ENCODE measurements at regions of chr3 and their contacts with region 1.

Region 1: DNA sequence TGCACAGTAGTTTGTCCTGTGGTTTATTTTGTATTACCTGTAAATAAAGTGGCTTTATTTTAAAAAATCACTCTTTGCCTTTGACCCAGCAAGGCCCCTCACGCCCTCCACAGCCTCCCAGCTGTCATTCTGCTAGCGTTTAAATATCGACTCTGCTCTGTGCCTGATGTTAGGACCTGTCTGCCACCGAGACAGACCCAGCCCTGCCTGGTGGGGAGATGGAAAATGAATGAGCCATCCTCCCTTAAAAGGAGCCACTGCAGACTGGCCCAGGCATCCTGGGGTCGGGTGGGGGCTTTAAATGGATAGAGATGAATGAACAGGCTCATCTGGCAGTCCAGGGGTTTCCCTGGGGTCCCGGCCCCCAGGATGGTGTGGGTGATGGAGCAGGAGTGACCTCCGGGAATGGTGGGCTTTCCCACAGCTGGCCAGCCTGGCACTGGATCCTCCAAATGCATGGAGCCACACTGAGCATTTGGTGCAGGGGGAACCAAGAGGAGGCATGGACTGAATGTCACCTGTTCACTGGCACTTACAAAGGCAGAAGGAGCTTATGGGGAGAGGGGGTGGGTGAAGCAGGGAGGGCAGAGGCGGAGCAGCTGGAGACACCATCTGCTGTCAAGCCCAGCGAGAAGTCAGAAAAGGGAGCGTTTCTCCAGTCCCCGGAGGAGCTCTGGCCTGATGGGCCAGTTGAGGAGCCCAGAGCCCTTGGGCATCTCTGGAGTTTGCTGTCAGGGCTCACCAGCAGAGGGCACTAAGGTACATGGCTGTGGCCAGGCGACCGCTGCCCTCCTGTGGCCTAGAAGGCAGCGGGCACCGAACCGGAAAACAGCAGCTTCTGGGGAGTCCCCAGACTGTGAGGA is 11.9 kb downstream of the GRM2 start:
- DNase-seq: peak; percentile 89
- H3K4me3 ChIP-seq: peak overlapping the region in 1 of 2 experiments; percentile 26; a peak in 1 of 4 replicates
- H3K27ac ChIP-seq: no peak overlapping the region
- H3K4me1 ChIP-seq: peaks cover 0 to 2% of the 10 kb centered on the region in 2 experiments; a peak in 1 of 4 replicates
- H3K27me3 ChIP-seq: no peaks in the 10 kb centered on the region
- CTCF ChIP-seq: peak; percentile 71
- EP300 ChIP-seq: no peak
- RAD21 ChIP-seq: peak; percentile 78

Region 2: DNA sequence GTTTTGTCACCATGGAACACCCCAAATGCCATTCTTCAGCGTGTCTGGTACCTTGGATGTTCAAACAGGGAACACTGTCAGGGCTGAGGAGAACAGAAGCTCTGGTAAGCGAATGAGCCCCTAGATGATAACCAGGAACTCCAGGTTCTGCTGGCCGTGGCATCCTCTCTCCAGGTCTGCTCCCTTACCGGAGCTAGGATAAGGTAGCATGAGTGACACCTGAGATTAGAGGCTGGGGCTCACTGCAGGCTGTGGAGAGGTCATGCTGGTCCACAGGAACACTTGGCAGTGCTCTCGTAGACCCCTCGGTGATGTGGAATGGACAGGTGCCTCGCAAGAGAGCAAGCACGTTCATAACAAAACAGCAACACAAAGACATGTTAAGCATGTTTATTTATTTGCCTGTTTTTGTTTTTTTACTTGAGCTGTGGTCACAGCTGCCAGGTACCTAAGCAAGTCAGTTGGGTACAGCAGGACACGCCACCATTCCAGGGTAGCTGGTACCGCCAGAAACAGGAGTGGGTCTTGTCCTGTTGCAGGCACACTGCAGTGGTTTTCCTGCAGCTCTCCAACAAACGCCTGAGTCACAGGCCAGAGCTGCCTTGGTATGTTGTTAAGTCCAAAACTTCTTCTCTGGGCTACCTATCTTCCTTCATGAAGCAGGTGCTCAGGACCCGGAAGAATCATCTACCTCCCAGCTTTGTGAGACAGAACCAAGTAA is 323.1 kb before region 1 on chr3:
- CTCF ChIA-PET with region 1: no interaction called
- POLR2A ChIA-PET with region 1: no interaction called
- DNase-seq: no peak
- H3K4me3 ChIP-seq: no peak overlapping the region
- H3K27ac ChIP-seq: no peak overlapping the region
- H3K4me1 ChIP-seq: peaks cover 11 to 40% of the 10 kb centered on the region in 2 experiments
- H3K27me3 ChIP-seq: no peaks in the 10 kb centered on the region
- CTCF ChIP-seq: no peak
- EP300 ChIP-seq: no peak
- RAD21 ChIP-seq: no peak

Region 3: DNA sequence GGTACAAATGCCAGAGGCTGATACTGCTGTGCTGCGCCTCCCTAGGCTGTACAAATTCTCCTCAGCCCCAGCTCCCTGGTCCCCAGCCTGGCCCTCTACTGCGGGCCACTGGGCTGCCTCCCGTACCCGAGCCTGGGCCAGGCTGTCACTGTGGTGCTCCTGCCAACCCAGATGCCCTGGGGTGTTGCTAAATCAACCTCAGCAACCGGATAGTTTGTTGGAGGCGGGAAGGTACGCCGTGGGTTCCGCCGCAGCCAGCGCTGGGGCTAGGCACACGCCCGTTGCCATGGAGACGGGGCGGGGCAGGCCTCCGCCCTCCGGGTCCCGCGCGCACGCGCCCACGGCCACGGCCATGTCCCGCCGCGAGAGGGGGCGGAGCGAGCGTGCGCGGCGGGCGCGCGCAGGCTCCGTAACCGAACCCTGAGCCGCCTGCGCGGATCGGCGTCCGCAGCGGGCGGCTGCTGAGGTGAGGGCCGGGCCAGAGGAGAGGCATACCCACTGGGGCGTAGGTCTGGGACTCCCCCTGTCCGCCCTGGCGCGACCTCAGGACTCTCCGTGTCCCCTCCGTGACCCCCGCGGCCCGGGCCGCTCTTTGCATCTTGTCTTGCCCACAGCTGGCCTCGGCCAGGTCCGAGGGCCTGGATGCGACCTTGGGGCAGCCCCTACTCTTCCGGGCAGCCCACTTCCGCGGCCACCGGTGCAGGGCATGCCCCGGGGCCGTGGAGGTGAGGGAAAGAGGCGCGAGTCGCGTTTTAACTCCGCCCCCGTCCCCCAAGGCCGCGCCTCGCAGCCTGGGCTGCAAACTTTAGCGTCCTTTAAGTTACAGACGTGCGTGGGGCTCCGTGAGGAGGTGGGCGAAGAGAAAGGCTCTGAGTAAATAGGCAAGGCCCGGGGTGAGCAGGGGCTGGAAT is 47.7 kb before region 1 on chr3 and contains the start of gene TEX264:
- CTCF ChIA-PET with region 1: interaction called, 10 read pairs
- POLR2A ChIA-PET with region 1: no interaction called
- DNase-seq: peak; percentile 97
- H3K4me3 ChIP-seq: peak within 1 kb of the TSS; percentile 85 to 96
- H3K27ac ChIP-seq: peak within 1 kb of the TSS; percentile 73 to 94
- H3K4me1 ChIP-seq: peaks cover 10 to 22% of the 10 kb centered on the region in 2 experiments; a peak in 3 of 4 replicates
- H3K27me3 ChIP-seq: no peaks in the 10 kb centered on the region
- CTCF ChIP-seq: no peak
- EP300 ChIP-seq: no peak
- RAD21 ChIP-seq: no peak
- polyA plus RNA-seq, gene TEX264: 82.1 and 86.0 TPM in 2 replicates

Region 4: DNA sequence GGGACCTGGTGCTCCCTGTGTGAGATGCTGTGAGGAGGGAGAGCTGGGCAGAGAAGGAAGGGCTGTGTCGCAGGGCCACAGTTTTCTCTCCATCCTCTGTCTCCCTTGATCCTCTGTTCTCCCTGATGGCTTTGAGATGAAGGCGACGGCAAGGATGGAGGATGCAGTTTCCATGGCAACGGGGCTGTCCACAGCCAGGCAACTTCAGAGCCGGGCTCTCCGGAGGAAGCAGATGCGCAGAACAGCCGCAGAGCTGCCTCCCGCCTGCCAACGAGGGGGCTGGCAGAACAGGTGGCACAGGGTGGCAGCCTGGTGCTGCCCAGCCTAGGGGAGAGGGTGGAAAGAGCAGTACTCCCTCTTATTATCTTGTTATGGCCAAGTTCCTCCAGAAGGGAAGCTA is 21.8 kb before region 1 on chr3:
- CTCF ChIA-PET with region 1: interaction called, 89 read pairs
- POLR2A ChIA-PET with region 1: no interaction called
- DNase-seq: peak; percentile 74
- H3K4me3 ChIP-seq: no peak overlapping the region
- H3K27ac ChIP-seq: no peak overlapping the region
- H3K4me1 ChIP-seq: no peaks in the 10 kb centered on the region; a peak in 1 of 4 replicates
- H3K27me3 ChIP-seq: no peaks in the 10 kb centered on the region
- CTCF ChIP-seq: no peak
- EP300 ChIP-seq: no peak
- RAD21 ChIP-seq: no peak

Region 5: GRCh38 chr3:51729042-51729633 is 10.4 kb after region 1 on chr3:
- CTCF ChIA-PET with region 1: interaction called, 42 read pairs
- POLR2A ChIA-PET with region 1: no interaction called
- DNase-seq: no peak
- H3K4me3 ChIP-seq: no peak overlapping the region
- H3K27ac ChIP-seq: no peak overlapping the region
- H3K4me1 ChIP-seq: no peaks in the 10 kb centered on the region
- H3K27me3 ChIP-seq: no peaks in the 10 kb centered on the region
- CTCF ChIP-seq: no peak
- EP300 ChIP-seq: no peak
- RAD21 ChIP-seq: no peak

Region 6: GRCh38 chr3:51777985-51778384 is 59.2 kb after region 1 on chr3:
- CTCF ChIA-PET with region 1: interaction called, 27 read pairs
- POLR2A ChIA-PET with region 1: no interaction called
- DNase-seq: peak; percentile 80
- H3K4me3 ChIP-seq: no peak overlapping the region
- H3K27ac ChIP-seq: peak overlapping the region in 1 of 2 experiments; percentile 72; a peak in 2 of 4 replicates
- H3K4me1 ChIP-seq: peaks cover 0 to 16% of the 10 kb centered on the region in 2 experiments; a peak in 1 of 4 replicates
- H3K27me3 ChIP-seq: no peaks in the 10 kb centered on the region
- CTCF ChIP-seq: no peak
- EP300 ChIP-seq: peak in 1 of 2 experiments; percentile 72; a peak in 2 of 4 replicates
- RAD21 ChIP-seq: peak; percentile 29

Region 7: DNA sequence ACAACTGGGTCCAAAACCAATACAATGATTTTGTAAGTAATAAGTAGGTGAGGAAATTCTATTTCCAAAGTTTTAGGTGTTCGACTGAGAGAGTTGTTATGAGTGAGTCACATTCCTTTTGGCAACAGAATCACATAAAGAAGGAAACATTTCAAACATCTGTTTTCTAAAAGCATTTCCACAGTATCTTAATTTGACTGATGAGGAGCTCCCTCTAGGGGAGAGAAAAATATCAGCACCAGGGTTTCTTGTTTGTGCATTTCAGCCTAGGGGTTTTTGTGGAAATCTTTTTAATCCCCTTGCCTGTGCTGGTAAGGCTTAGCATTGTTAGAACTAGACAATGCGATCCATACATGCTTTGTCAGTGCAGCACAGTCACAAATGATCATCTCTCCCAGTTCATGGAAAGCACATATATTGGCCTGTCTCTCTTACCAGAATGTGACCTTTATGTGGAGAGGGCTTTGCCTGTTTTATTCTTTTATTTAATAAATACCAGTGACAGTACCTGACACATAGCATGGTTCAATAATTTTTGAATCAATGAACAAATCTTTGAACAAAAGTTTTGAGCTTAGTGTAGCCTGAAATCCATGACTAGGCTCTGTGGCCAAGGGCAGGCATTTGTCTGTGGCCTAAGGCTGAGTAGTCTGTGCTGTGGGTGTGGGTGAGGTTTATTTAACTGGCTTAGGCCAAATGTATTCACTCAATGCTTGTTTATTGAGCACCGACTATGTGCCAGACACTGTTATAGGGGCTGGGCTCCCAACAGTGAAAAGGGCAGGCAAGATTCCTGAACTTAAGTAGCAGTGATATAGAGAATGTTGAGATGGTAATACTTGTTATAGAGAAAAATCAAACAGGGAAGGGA is 81.3 kb after region 1 on chr3:
- CTCF ChIA-PET with region 1: interaction called, 138 read pairs
- POLR2A ChIA-PET with region 1: no interaction called
- DNase-seq: peak; percentile 61
- H3K4me3 ChIP-seq: no peak overlapping the region; a peak in 1 of 4 replicates
- H3K27ac ChIP-seq: no peak overlapping the region
- H3K4me1 ChIP-seq: peaks cover 0 to 17% of the 10 kb centered on the region in 2 experiments; a peak in 2 of 4 replicates
- H3K27me3 ChIP-seq: no peaks in the 10 kb centered on the region; the same call in 1 of the 2 replicates
- CTCF ChIP-seq: peak; percentile 88
- EP300 ChIP-seq: no peak
- RAD21 ChIP-seq: peak; percentile 82

Region 8: DNA sequence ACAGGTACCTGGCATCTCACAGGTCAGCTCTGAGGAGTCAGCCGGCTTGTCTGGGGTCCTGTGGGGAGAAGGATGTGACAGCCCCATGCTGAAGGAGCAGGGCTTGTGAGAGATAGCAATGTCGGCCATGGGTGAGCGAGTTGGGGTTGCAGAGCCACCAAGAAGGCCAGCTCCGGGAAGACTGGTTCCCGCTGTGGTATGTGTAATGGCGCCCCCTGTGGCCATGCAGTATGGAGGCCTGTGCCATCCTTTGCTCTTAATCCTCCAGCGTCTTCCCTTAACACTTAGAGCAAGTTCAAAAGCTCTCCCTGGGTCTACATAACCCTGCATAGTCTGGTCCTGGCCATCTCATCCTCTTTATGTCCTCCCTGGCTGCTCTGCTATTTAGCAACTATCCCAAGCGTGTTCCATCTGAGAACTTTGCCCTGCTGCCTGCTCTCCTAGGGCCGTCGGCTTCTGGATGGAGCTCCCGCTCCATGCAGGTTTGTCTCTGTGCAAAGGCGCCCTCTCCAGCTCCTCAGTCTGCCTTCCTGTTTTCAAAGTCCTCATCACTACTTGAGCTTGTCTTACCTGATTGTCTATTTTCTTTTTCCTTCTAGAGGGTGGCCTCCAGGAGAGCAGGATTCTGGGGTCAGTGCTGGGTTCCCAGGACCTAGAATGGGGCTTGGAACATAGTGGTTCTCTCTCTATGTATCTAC is 101.1 kb after region 1 on chr3:
- CTCF ChIA-PET with region 1: interaction called, 19 read pairs
- POLR2A ChIA-PET with region 1: no interaction called
- DNase-seq: no peak
- H3K4me3 ChIP-seq: no peak overlapping the region
- H3K27ac ChIP-seq: no peak overlapping the region
- H3K4me1 ChIP-seq: no peaks in the 10 kb centered on the region; a peak in 1 of 4 replicates
- H3K27me3 ChIP-seq: no peaks in the 10 kb centered on the region; the same call in 1 of the 2 replicates
- CTCF ChIP-seq: peak; percentile 36; the same call in 1 of the 2 replicates
- EP300 ChIP-seq: no peak
- RAD21 ChIP-seq: no peak

Region 9: DNA sequence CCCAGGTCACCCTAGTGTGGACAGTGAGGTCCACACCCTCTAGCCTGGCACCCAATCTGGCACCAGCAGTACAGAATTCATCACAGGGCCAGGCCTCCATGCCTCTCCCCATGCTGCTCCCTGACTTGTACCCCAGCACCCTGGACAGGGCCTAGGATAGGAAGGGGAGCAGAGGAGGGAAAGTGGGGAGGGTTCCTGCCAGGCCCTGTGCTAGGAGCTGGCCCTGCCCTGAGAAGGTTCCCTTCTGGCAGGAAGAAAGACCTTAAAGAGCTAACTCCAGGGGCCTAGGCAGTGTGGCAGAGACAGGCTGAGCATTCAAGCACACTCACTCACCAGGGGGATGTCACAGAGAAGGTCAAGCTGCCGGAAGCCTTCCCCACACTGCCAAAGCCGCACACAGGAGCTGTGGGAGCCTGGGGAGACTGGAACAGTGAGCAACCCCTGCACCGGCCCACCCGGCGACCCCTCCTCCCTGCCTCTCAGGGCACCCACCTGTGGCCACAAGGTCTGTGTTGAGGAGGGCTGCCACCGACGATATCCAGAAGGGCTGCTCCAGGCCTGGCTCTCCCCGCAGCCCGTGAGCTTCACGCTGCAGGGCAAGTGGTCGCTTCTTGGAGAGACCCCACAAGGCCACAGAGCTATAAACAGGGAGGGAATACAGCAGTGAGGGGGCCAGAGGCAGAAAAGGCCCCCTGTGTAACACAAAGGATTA is 215.5 kb after region 1 on chr3:
- CTCF ChIA-PET with region 1: no interaction called
- POLR2A ChIA-PET with region 1: no interaction called
- DNase-seq: no peak
- H3K4me3 ChIP-seq: no peak overlapping the region
- H3K27ac ChIP-seq: no peak overlapping the region
- H3K4me1 ChIP-seq: no peaks in the 10 kb centered on the region; a peak in 1 of 4 replicates
- H3K27me3 ChIP-seq: no peaks in the 10 kb centered on the region
- CTCF ChIP-seq: no peak
- EP300 ChIP-seq: no peak
- RAD21 ChIP-seq: no peak